Activated T-helper 1 cell treated with anti-CD3 and anti-CD28 coated beads, Interleukin-12 subunit alpha, Interleukin-12 subunit beta, Interleukin-2, Interleukin-4 antibody, amounts not matched to agents 30 ng/mL and 10 ng/mL and 1 ng/mL, durations not matched to agents 14 hours and 24 hours and 36 hours (primary cell): ENCODE measurements at regions of chr14 and their contacts with region 1.

Region 1: GRCh38 chr14:49461529-49462401 is 124.4 kb downstream of the RPS29 start:
- DNase-seq: peak; percentile 40
- H3K4me3 Mint-ChIP-seq: no peak overlapping the region
- H3K27ac Mint-ChIP-seq: no peak overlapping the region
- H3K4me1 Mint-ChIP-seq: no peaks in the 10 kb centered on the region
- H3K27me3 Mint-ChIP-seq: peaks cover 26% of the 10 kb centered on the region

Region 2: GRCh38 chr14:49427117-49427516 is 34.6 kb before region 1 on chr14:
- intact Hi-C with region 1: no loop called
- DNase-seq: no peak
- H3K4me3 Mint-ChIP-seq: no peak overlapping the region
- H3K27ac Mint-ChIP-seq: no peak overlapping the region
- H3K4me1 Mint-ChIP-seq: no peaks in the 10 kb centered on the region
- H3K27me3 Mint-ChIP-seq: peaks cover 13% of the 10 kb centered on the region

Region 3: GRCh38 chr14:49497725-49498348 is 36.1 kb after region 1 on chr14:
- intact Hi-C with region 1: loop called (anchors 1 kb)
- DNase-seq: peak; percentile 2
- H3K4me3 Mint-ChIP-seq: no peak overlapping the region
- H3K27ac Mint-ChIP-seq: no peak overlapping the region
- H3K4me1 Mint-ChIP-seq: no peaks in the 10 kb centered on the region
- H3K27me3 Mint-ChIP-seq: peaks cover 15% of the 10 kb centered on the region

Region 4: DNA sequence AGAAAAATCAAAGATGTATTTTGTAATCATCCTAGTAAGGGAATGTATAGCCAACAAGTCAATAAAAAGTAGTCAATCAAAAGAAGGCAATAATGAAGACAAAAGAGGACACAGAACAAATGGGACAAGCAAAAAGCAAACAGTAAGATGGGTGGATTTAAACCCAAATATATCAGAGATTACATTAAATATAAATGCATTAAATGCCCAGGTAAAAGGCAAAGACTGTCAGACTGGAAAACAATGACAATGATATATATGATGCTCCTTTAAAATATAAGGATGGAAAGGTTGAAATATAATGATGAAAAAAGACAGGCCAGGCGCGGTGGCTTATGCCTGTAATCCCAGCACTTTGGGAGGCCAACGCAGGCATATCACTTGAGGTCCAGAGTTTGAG is 355.1 kb after region 1 on chr14:
- intact Hi-C with region 1: no loop called
- DNase-seq: no peak
- H3K4me3 Mint-ChIP-seq: no peak overlapping the region
- H3K27ac Mint-ChIP-seq: no peak overlapping the region
- H3K4me1 Mint-ChIP-seq: no peaks in the 10 kb centered on the region
- H3K27me3 Mint-ChIP-seq: no peaks in the 10 kb centered on the region

Region 5: GRCh38 chr14:49828640-49829039 is 366.9 kb after region 1 on chr14:
- intact Hi-C with region 1: loop called (anchors 10 kb)
- DNase-seq: no peak
- H3K4me3 Mint-ChIP-seq: no peak overlapping the region
- H3K27ac Mint-ChIP-seq: no peak overlapping the region
- H3K4me1 Mint-ChIP-seq: peaks cover 7% of the 10 kb centered on the region
- H3K27me3 Mint-ChIP-seq: no peaks in the 10 kb centered on the region